MCF 10A (cell line): ENCODE measurements at regions of chr1 and their contacts with region 1.

Region 1: DNA sequence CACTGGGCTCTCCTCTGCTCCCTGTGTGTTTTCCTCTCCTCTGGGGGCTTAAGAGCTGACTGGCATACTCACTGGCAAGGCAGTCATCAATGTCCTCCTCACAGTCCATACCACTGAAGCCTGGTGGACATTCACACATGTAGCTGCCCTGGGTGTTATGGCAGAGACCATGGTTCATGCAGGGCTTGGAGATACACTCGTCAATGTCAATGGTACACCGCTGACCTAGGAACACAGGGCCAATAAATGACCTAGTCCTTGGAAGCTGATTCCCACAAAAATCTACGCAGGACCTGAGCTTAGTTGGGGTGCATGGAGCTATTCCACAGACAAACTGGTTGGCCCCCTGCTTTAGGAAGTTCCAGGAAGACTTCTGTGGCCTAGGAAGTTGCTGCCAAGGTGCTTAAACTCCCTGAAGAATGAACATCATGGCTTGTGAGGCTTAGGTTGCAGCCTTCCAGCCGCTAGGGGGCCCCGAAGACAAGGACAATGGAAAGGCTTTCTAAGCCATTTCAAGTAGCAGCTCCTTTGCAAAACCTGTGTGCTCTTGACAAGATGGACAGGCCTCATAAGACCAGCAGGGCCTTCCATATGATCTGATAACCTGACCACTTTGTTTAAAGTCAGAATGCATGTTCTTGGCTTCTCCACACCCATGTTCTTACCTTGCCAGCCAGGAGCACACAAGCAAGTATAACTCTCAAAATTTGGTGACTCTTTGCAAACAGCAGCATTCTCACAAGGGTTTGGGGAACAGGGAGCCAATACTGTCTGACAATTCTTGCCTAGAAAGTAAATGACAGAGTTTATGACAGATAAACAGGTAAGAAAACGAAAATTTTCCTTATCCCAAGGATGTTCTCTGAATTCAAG is 52.3 kb upstream of the ADAM30 start:
- DNase-seq: peak; percentile 78
- H3K4me3 Mint-ChIP-seq: no peak overlapping the region
- H3K27ac Mint-ChIP-seq: peak overlapping the region; percentile 27
- H3K4me1 Mint-ChIP-seq: peaks cover 13% of the 10 kb centered on the region
- H3K27me3 Mint-ChIP-seq: no peaks in the 10 kb centered on the region
- CTCF ChIP-seq: peak; percentile 85

Region 2: GRCh38 chr1:119367427-119368124 is 581.0 kb before region 1 on chr1:
- CTCF ChIA-PET with region 1: no interaction called
- POLR2A ChIA-PET with region 1: no interaction called
- intact Hi-C with region 1: no loop called
- DNase-seq: peak; percentile 60
- H3K4me3 Mint-ChIP-seq: no peak overlapping the region
- H3K27ac Mint-ChIP-seq: no peak overlapping the region
- H3K4me1 Mint-ChIP-seq: peaks cover 14% of the 10 kb centered on the region
- H3K27me3 Mint-ChIP-seq: no peaks in the 10 kb centered on the region
- CTCF ChIP-seq: peak; percentile 94

Region 3: DNA sequence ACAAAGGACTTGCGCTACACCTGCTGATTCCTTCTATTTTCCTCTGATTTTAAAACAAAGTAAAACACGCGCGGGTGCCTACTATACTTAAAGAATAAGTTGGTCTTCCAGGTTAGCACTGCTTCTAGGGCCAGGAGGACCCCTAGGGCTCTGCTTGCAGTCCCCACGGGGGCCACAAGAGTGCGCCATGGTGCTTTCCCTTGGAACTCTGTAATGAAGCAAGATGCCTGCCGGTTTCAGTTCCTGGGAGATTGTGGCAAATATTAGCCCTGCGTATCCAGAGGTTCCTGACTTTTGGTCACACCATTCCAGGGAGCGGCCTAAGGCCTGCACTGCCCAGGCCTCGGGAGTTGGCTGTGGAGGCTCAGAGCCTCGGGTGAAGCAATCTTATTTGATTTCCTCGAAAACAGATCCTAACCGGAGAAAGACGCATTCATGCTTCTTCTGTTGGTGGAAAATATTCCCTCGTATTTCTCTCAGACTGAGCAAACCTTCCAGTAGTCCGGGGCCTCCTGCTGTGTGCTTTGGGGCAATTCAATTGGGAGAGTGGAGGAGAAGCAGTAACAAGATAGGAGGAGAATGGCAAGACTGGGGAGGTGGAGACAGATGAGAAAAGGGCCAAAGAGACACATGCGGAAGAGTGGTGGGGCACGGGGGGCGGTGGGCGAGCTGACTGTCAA is 77.5 kb before region 1 on chr1:
- CTCF ChIA-PET with region 1: interaction called, 15 read pairs
- POLR2A ChIA-PET with region 1: interaction called, 3 read pairs
- intact Hi-C with region 1: no loop called
- DNase-seq: peak; percentile 77
- H3K4me3 Mint-ChIP-seq: no peak overlapping the region
- H3K27ac Mint-ChIP-seq: peak overlapping the region; percentile 59
- H3K4me1 Mint-ChIP-seq: peaks cover 6% of the 10 kb centered on the region
- H3K27me3 Mint-ChIP-seq: no peaks in the 10 kb centered on the region
- CTCF ChIP-seq: peak; percentile 98

Region 4: DNA sequence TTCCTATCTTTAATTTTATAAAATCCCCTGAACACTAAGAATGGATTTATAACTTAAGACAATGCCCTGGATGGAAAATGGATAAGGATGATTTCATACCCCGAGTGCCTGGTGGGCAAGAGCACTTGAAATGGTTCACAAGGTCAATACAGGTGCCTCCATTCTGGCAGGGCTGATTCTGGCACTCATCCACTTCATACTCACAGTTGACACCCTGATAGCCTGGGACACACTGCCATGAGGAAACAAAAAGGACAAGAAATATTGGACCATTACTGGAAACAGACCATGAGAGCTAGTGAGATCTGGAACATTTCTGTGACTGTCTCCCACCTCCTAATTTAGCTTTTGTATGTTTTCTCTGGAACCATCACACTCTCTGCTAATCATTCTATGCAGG is 13.2 kb before region 1 on chr1:
- CTCF ChIA-PET with region 1: interaction called, 15 read pairs
- POLR2A ChIA-PET with region 1: interaction called, 4 read pairs
- intact Hi-C with region 1: no loop called
- DNase-seq: no peak
- H3K4me3 Mint-ChIP-seq: no peak overlapping the region
- H3K27ac Mint-ChIP-seq: no peak overlapping the region
- H3K4me1 Mint-ChIP-seq: no peaks in the 10 kb centered on the region
- H3K27me3 Mint-ChIP-seq: no peaks in the 10 kb centered on the region
- CTCF ChIP-seq: no peak

Region 5: DNA sequence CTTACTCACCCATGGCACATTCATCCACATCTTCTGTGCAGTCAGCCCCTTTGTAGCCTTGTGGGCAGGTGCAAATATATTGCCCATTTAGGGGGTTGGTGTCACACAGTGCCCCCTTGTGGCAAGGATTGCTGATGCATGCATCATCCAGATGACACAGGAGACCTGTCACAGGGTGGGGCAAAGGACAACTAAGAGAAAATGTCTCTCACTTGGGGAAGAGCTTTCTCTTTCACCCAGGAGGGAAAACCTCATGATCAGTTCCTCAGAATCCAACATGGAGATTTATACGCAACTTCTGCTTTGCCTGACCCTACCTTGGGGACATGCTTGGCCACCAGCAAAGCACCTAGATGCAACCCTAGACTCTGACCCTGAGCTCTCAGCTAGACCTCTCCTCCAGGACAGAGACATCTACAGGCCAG is 19.5 kb after region 1 on chr1:
- CTCF ChIA-PET with region 1: interaction called, 10 read pairs
- POLR2A ChIA-PET with region 1: interaction called, 4 read pairs
- intact Hi-C with region 1: no loop called
- DNase-seq: peak; percentile 67
- H3K4me3 Mint-ChIP-seq: no peak overlapping the region
- H3K27ac Mint-ChIP-seq: peak overlapping the region; percentile 92
- H3K4me1 Mint-ChIP-seq: peaks cover 14% of the 10 kb centered on the region
- H3K27me3 Mint-ChIP-seq: no peaks in the 10 kb centered on the region
- CTCF ChIP-seq: peak; percentile 73